AG04449 (cell line): ENCODE measurements at regions of chr12 and their contacts with region 1.

Region 1: GRCh38 chr12:117367011-117367638 is 5.7 kb upstream of the NOS1 start:
- DNase-seq: peak; percentile 12
- H3K4me3 ChIP-seq: no peak overlapping the region
- CTCF ChIP-seq: peak; percentile 83

Region 2: GRCh38 chr12:117212563-117213190 is 154.4 kb before region 1 on chr12:
- CTCF ChIA-PET with region 1: interaction called, 10 read pairs
- POLR2A ChIA-PET with region 1: no interaction called
- DNase-seq: peak; percentile 36
- H3K4me3 ChIP-seq: no peak overlapping the region
- CTCF ChIP-seq: peak; percentile 79

Region 3: GRCh38 chr12:117352206-117352605 is 14.9 kb before region 1 on chr12:
- CTCF ChIA-PET with region 1: interaction called, 10 read pairs
- POLR2A ChIA-PET with region 1: no interaction called
- DNase-seq: no peak
- H3K4me3 ChIP-seq: no peak overlapping the region
- CTCF ChIP-seq: no peak

Region 4: DNA sequence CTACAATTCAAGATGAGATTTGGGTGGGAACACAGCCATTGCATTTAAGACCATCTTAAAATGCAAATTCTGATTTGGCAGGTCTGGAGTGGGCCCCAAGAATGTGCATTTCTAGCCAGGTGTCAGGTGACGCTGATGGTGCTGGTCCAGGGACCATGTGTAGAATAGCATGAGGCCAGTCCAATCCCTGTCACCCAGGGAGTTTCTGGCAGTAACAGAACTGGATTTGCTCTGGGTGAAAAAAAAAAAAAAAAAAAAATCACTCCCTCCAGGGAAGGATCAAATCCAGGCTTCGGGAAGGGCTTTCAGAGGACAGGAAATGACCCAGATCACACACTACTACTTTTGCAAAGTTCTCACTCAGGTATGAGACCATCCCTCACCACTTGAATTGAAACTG is 207.5 kb after region 1 on chr12:
- CTCF ChIA-PET with region 1: interaction called, 13 read pairs
- POLR2A ChIA-PET with region 1: no interaction called
- DNase-seq: no peak
- H3K4me3 ChIP-seq: no peak overlapping the region
- CTCF ChIP-seq: no peak

Region 5: GRCh38 chr12:117587631-117588287 is 220.6 kb after region 1 on chr12:
- CTCF ChIA-PET with region 1: interaction called, 131 read pairs
- POLR2A ChIA-PET with region 1: no interaction called
- DNase-seq: no peak
- H3K4me3 ChIP-seq: no peak overlapping the region
- CTCF ChIP-seq: peak; percentile 77

Region 6: GRCh38 chr12:117850048-117850447 is 482.9 kb after region 1 on chr12:
- CTCF ChIA-PET with region 1: interaction called, 129 read pairs
- POLR2A ChIA-PET with region 1: no interaction called
- DNase-seq: no peak
- H3K4me3 ChIP-seq: no peak overlapping the region
- CTCF ChIP-seq: peak; percentile 81

Region 7: GRCh38 chr12:118271790-118272417 is 904.8 kb after region 1 on chr12:
- CTCF ChIA-PET with region 1: no interaction called
- POLR2A ChIA-PET with region 1: no interaction called
- DNase-seq: no peak
- H3K4me3 ChIP-seq: no peak overlapping the region
- CTCF ChIP-seq: no peak